PC-9 (cell line): ENCODE measurements at regions of chr2 and their contacts with region 1.

Region 1: DNA sequence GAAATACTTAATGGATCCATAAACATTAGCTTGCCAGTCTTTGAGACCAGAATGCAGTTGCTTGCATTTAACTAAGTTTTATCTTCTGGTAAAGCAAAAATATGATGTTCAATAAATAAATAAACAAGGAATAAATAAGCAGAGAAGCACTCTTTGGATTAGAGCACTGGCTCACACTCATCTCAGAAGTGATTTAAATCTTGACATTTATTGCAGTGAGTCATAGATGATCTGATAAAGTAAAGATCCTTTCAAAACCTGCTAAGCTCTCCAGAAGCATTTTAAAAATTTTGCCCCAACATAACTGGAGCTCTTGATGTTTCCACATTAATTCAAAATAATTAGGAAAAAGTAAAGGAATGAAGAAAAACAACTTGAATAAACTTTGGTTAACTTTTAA is 66.8 kb downstream of the KYNU start:
- DNase-seq: peak in 1 of 2 experiments; percentile 90
- H3K4me3 ChIP-seq: no peak overlapping the region
- H3K27ac ChIP-seq: peak overlapping the region; percentile 65
- H3K4me1 ChIP-seq: peaks cover 39% of the 10 kb centered on the region
- H3K27me3 ChIP-seq: no peaks in the 10 kb centered on the region
- CTCF ChIP-seq: no peak

Region 2: GRCh38 chr2:142883526-142883925 is 60.8 kb before region 1 on chr2:
- CTCF ChIA-PET with region 1: no interaction called
- POLR2A ChIA-PET with region 1: interaction called, 29 read pairs
- intact Hi-C with region 1: no loop called
- DNase-seq: no peak
- H3K4me3 ChIP-seq: no peak overlapping the region
- H3K27ac ChIP-seq: no peak overlapping the region
- H3K4me1 ChIP-seq: 0 out of 2 replicates have a peak, but pooled peaks cover 3% of the 10 kb centered on the region
- H3K27me3 ChIP-seq: no peaks in the 10 kb centered on the region
- CTCF ChIP-seq: no peak

Region 3: GRCh38 chr2:142903780-142904179 is 40.5 kb before region 1 on chr2:
- CTCF ChIA-PET with region 1: no interaction called
- POLR2A ChIA-PET with region 1: no interaction called
- intact Hi-C with region 1: loop called (anchors 1 kb)
- DNase-seq: peak; percentile 80 to 97
- H3K4me3 ChIP-seq: peak overlapping the region; percentile 2; the same call in 1 of the 2 replicates
- H3K27ac ChIP-seq: peak overlapping the region; percentile 94
- H3K4me1 ChIP-seq: peaks cover 53% of the 10 kb centered on the region
- H3K27me3 ChIP-seq: no peaks in the 10 kb centered on the region
- CTCF ChIP-seq: no peak